Breast epithelium (tissue), 4 donors: ENCODE measurements at regions of chr4 and their contacts with region 1.

Region 1: GRCh38 chr4:39134683-39135319 is 47.5 kb upstream of the WDR19 start:
- DNase-seq: no peak
- H3K4me3 ChIP-seq: no peak overlapping the region
- H3K27ac ChIP-seq: no peak overlapping the region
- H3K4me1 ChIP-seq: no peaks in the 10 kb centered on the region
- H3K27me3 ChIP-seq: no peaks in the 10 kb centered on the region
- CTCF ChIP-seq: no peak
- POLR2A ChIP-seq: no peak

Region 2: GRCh38 chr4:38914854-38915253 is 219.9 kb before region 1 on chr4:
- intact Hi-C with region 1: loop called (anchors 10 kb)
- DNase-seq: no peak
- H3K4me3 ChIP-seq: no peak overlapping the region
- H3K27ac ChIP-seq: no peak overlapping the region
- H3K4me1 ChIP-seq: no peaks in the 10 kb centered on the region
- H3K27me3 ChIP-seq: no peaks in the 10 kb centered on the region
- CTCF ChIP-seq: no peak
- POLR2A ChIP-seq: no peak

Region 3: GRCh38 chr4:40020221-40020943 is 885.6 kb after region 1 on chr4:
- intact Hi-C with region 1: loop called (anchors 10 kb)
- DNase-seq: no peak
- H3K4me3 ChIP-seq: no peak overlapping the region
- H3K27ac ChIP-seq: no peak overlapping the region
- H3K4me1 ChIP-seq: no peaks in the 10 kb centered on the region
- H3K27me3 ChIP-seq: no peaks in the 10 kb centered on the region
- CTCF ChIP-seq: no peak
- POLR2A ChIP-seq: no peak